Ascending aorta (tissue), 2 donors: ENCODE measurements at regions of chr16 and their contacts with region 1.

Region 1: DNA sequence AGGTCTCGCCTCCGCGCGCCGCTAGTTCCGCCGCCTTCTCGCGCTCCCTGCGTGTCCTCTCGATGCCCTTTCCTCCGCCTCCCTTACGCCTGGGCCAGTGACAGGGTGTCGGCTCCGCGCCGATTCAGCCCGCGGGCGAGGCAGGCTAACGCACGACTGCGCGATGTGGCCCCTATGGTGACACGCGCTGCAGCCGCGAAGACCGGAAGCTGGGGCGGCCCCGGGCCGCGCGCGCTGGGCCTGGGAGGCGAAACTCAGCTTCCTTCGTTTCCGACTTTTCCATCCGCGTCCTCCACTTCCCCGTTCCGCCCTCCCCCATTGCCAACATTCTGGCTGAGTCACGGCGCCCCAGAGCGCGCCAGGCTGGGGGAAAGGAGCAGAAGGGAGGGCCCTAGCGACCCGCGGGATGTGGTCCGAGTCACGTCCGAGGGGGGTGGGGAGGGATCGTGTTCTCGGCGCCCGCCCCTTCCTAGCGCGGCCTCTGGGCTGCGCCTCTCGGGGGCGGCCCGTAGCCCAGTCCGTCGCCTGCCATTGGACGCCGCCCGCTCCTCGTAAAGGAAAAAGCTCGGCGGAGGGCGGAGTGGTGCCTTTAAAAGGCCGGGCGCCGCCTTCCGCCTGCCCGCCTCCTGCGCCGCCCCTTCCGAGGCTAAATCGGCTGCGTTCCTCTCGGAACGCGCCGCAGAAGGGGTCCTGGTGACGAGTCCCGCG is at the start of gene ALDOA:
- DNase-seq: peak; percentile 93 to 99
- H3K4me3 ChIP-seq: peak within 1 kb of the TSS; percentile 92
- H3K27ac ChIP-seq: peak within 1 kb of the TSS; percentile 97 to 99
- H3K4me1 ChIP-seq: peaks cover 22 to 51% of the 10 kb centered on the region in 2 donors
- H3K27me3 ChIP-seq: no peaks in the 10 kb centered on the region
- CTCF ChIP-seq: no peak
- total RNA-seq, gene ALDOA: 1,202 TPM

Region 2: GRCh38 chr16:29815793-29816693 is 249.3 kb before region 1 on chr16 and contains the start of gene PAGR1:
- intact Hi-C with region 1: loop called (anchors 5 kb)
- DNase-seq: peak; percentile 96 to 100
- H3K4me3 ChIP-seq: peak within 1 kb of the TSS; percentile 62 to 70
- H3K27ac ChIP-seq: peak within 1 kb of the TSS; percentile 88 to 94
- H3K4me1 ChIP-seq: peaks cover 0 to 39% of the 10 kb centered on the region in 2 donors
- H3K27me3 ChIP-seq: no peaks in the 10 kb centered on the region
- CTCF ChIP-seq: peak; percentile 82 to 91 (median 90)
- total RNA-seq, gene PAGR1: 54.3 TPM

Region 3: DNA sequence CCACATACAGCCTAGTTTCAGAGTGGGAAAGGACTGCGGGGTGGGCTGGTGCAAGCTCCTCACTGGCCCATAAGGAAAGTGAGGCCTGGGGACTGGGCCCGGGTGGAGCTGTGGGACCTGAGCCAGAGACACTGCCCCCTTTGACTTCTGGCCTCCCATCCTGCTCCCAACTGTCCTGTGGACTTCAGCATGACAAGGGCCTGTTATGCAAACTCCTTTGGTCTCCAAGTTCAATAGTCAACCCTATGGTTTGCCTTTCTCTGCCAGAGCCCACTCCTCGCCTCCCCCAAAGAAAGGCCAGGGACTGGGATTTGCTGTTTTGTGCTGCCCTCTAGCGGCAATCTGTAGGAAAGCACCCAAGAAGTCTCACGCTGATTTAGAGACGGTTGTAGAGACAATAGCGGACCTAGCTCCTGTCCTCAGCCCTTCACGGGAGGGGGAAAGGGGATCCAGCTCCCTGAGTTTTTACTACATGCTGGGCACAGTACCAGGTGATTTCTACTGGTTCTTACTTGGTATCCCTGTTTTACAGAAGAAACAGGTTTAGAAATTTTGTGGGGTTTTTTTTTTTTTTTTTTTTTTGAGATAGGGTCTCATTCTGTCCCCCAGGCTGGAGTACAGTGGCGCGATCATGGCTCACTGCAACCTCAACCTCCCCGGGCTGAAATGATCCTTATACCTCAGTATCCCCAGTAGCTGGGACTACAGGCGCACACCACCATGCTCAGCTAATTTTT is 33.0 kb before region 1 on chr16:
- intact Hi-C with region 1: no loop called
- DNase-seq: no peak
- H3K4me3 ChIP-seq: no peak overlapping the region
- H3K27ac ChIP-seq: no peak overlapping the region
- H3K4me1 ChIP-seq: peaks cover 4 to 5% of the 10 kb centered on the region in 2 donors
- H3K27me3 ChIP-seq: peaks cover 28% of the 10 kb centered on the region
- CTCF ChIP-seq: peak; percentile 41 to 71 (median 56)

Region 4: GRCh38 chr16:30075507-30076275 is 10.4 kb after region 1 on chr16 and contains the start of gene PPP4C:
- intact Hi-C with region 1: loop called (anchors 1 kb)
- DNase-seq: peak; percentile 46 to 95
- H3K4me3 ChIP-seq: peak within 1 kb of the TSS; percentile 69 to 96
- H3K27ac ChIP-seq: peak within 1 kb of the TSS; percentile 92 to 93
- H3K4me1 ChIP-seq: peaks cover 6 to 19% of the 10 kb centered on the region in 2 donors
- H3K27me3 ChIP-seq: no peaks in the 10 kb centered on the region
- CTCF ChIP-seq: peak in 1 of 3 experiments; percentile 17
- total RNA-seq, gene PPP4C: 50.7 TPM

Region 5: GRCh38 chr16:30122604-30123160 is 57.4 kb after region 1 on chr16:
- intact Hi-C with region 1: loop called (anchors 1 kb)
- DNase-seq: peak in 1 of 2 donors; percentile 72
- H3K4me3 ChIP-seq: peak overlapping the region; percentile 88 to 99
- H3K27ac ChIP-seq: peak overlapping the region; percentile 86 to 92
- H3K4me1 ChIP-seq: peaks cover 0 to 9% of the 10 kb centered on the region in 2 donors
- H3K27me3 ChIP-seq: no peaks in the 10 kb centered on the region
- CTCF ChIP-seq: no peak

Region 6: GRCh38 chr16:30378236-30379204 is 313.2 kb after region 1 on chr16:
- intact Hi-C with region 1: loop called (anchors 1 kb)
- DNase-seq: peak; percentile 96 to 100
- H3K4me3 ChIP-seq: peak overlapping the region; percentile 67 to 88
- H3K27ac ChIP-seq: peak overlapping the region; percentile 99 to 100
- H3K4me1 ChIP-seq: peaks cover 8 to 9% of the 10 kb centered on the region in 2 donors
- H3K27me3 ChIP-seq: no peaks in the 10 kb centered on the region
- CTCF ChIP-seq: peak in 2 of 3 experiments; percentile 6 to 28